CD8-positive, alpha-beta memory T cell (primary cell): ENCODE measurements at regions of chr1 and their contacts with region 1.

Region 1: DNA sequence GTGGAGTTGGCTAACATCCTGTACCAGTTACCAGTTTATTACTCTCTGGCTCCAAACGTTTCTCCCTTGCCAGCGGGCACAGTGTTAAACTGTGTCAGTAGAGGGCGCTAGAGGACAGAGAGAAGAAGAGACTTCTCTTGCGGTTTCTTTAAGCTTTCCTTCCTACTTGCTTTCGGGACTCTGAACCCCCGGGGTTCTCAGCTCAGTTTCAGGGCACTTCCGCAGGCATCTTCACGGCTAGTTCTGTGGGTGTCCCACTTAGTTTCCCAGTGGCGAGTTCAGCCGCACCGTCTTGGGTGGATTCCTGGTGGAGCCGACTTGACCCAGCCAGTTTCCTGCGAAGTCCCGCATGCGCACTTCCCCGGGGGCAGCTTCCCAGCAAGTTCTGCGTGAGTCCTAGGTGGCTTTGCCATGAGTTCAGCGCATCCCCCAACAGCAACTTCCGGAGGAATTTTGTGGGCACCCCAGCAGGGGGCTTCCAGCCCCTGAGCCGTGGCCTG is 37.9 kb upstream of the BTG2 start:
- DNase-seq: peak; percentile 68 to 88 (median 82)
- H3K4me3 ChIP-seq: peak overlapping the region; percentile 83
- H3K4me3 Mint-ChIP-seq: peak overlapping the region; percentile 82 to 93 (median 87)
- H3K27ac ChIP-seq: no peak overlapping the region
- H3K27ac Mint-ChIP-seq: peak overlapping the region; percentile 82 to 95 (median 92)
- H3K4me1 ChIP-seq: peaks cover 34% of the 10 kb centered on the region
- H3K4me1 Mint-ChIP-seq: peaks cover 11 to 22% (median 21%) of the 10 kb centered on the region in 3 donors
- H3K27me3 ChIP-seq: no peaks in the 10 kb centered on the region
- H3K27me3 Mint-ChIP-seq: peaks cover 2 to 3% of the 10 kb centered on the region in 2 donors

Region 2: DNA sequence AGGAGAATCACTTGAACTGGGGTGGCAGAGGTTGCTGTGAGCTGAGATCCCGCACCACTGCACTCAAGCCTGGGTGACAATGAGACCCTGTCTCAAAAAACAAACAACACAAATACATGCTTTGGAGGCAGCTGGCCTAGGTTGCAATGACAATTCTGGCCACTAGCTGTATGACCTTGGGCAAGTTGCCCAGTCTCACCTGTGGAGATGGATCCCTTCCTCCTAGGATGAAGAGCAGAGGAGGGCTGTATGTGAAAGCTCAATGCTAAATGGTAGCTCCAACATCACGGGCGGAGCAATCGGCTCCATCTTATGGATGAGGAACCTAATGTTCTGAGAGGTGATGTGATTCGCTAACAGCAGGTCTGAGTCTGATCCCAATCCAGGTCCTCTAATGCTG is 119.3 kb before region 1 on chr1:
- CTCF ChIA-PET with region 1: no interaction called
- POLR2A ChIA-PET with region 1: no interaction called
- DNase-seq: no peak
- H3K4me3 ChIP-seq: no peak overlapping the region
- H3K4me3 Mint-ChIP-seq: no peak overlapping the region
- H3K27ac ChIP-seq: no peak overlapping the region
- H3K27ac Mint-ChIP-seq: no peak overlapping the region
- H3K4me1 ChIP-seq: no peaks in the 10 kb centered on the region
- H3K4me1 Mint-ChIP-seq: no peaks in the 10 kb centered on the region
- H3K27me3 ChIP-seq: no peaks in the 10 kb centered on the region
- H3K27me3 Mint-ChIP-seq: peaks cover 7 to 11% of the 10 kb centered on the region in 2 donors

Region 3: GRCh38 chr1:203252678-203253077 is 14.7 kb before region 1 on chr1:
- CTCF ChIA-PET with region 1: interaction called, 15 read pairs
- POLR2A ChIA-PET with region 1: no interaction called
- DNase-seq: no peak
- H3K4me3 ChIP-seq: no peak overlapping the region
- H3K4me3 Mint-ChIP-seq: no peak overlapping the region
- H3K27ac ChIP-seq: no peak overlapping the region
- H3K27ac Mint-ChIP-seq: no peak overlapping the region
- H3K4me1 ChIP-seq: no peaks in the 10 kb centered on the region
- H3K4me1 Mint-ChIP-seq: no peaks in the 10 kb centered on the region
- H3K27me3 ChIP-seq: no peaks in the 10 kb centered on the region
- H3K27me3 Mint-ChIP-seq: peaks cover 34 to 78% of the 10 kb centered on the region in 2 donors

Region 4: DNA sequence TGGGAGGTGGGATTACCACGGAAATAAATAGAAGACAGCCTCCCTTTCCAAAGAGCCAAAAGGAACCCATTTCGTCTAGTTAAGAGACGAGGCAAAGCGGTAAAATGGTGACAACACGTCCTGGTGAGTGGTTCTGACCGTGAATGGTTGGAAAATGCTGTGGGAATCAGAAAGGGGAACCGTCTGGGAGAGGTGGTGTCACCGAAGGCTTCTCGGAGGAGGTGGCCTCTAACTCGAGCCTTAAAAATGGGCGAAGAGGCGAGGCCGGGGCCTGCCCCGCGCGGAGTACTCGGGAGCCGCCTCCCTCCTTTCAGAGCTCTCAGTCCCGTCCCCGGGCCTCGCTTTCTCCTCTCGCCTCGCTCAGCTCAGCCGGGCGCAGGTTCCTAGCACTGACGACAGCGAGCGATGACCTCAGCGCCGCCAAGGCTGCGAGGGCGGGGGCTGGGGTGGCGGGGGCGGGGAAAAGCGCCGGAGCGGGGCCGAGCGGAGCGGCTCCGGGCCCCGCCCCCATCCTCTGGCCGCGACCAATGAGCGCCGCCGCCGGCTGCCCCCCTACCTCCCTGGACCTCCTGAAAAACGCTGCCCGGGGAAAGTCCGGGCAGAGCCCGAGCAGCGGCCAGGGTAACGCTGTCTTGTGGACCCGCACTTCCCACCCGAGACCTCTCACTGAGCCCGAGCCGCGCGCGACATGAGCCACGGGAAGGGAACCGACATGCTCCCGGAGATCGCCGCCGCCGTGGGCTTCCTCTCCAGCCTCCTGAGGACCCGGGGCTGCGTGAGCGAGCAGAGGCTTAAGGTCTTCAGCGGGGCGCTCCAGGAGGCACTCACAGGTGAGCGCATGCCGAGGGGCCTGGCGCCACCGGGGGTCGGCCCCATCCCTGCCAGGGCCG is 37.8 kb after region 1 on chr1 and contains the start of gene BTG2:
- CTCF ChIA-PET with region 1: interaction called, 108 read pairs
- POLR2A ChIA-PET with region 1: interaction called, 20 read pairs
- DNase-seq: peak; percentile 89 to 95 (median 90)
- H3K4me3 ChIP-seq: peak within 1 kb of the TSS; percentile 92
- H3K4me3 Mint-ChIP-seq: peak within 1 kb of the TSS; percentile 92 to 99 (median 98)
- H3K27ac ChIP-seq: peak within 1 kb of the TSS; percentile 98
- H3K27ac Mint-ChIP-seq: peak within 1 kb of the TSS; percentile 98 to 100 (median 99)
- H3K4me1 ChIP-seq: peaks cover 40% of the 10 kb centered on the region
- H3K4me1 Mint-ChIP-seq: peaks cover 57 to 65% (median 59%) of the 10 kb centered on the region in 3 donors
- H3K27me3 ChIP-seq: no peaks in the 10 kb centered on the region
- H3K27me3 Mint-ChIP-seq: peaks cover 0 to 14% of the 10 kb centered on the region in 2 donors
- total RNA-seq, gene BTG2: 97.8 to 102 TPM

Region 5: GRCh38 chr1:203326830-203327683 is 59.7 kb after region 1 on chr1:
- CTCF ChIA-PET with region 1: interaction called, 775 read pairs
- POLR2A ChIA-PET with region 1: interaction called, 14 read pairs
- DNase-seq: peak; percentile 91 to 97 (median 95)
- H3K4me3 ChIP-seq: peak overlapping the region; percentile 78
- H3K4me3 Mint-ChIP-seq: peak overlapping the region; percentile 77 to 90 (median 80)
- H3K27ac ChIP-seq: peak overlapping the region; percentile 90
- H3K27ac Mint-ChIP-seq: peak overlapping the region; percentile 93 to 99 (median 98)
- H3K4me1 ChIP-seq: peaks cover 63% of the 10 kb centered on the region
- H3K4me1 Mint-ChIP-seq: peaks cover 65 to 68% (median 66%) of the 10 kb centered on the region in 3 donors
- H3K27me3 ChIP-seq: no peaks in the 10 kb centered on the region
- H3K27me3 Mint-ChIP-seq: peaks cover 0 to 3% of the 10 kb centered on the region in 2 donors

Region 6: DNA sequence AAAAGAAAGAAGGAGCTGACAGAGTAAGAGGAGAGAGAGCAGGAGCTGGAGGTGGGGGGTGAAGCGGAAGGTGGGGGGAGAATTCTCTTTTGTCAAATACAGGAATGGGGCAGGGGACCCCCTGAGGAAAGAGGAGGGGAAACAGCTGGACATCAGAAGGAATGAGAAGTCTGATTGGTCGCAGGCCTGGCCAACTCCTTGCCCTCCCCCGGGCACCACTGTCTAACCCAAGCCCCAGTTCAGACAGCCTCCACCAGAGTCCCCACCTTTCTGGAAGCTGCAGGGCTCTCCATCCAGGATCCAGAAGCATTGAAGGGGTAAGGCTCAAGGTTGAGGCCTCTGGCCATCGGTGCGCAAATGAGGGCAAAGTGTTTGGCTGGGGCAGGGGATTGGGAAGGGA is 226.5 kb after region 1 on chr1 and contains the start of gene OPTC:
- CTCF ChIA-PET with region 1: interaction called, 228 read pairs
- POLR2A ChIA-PET with region 1: no interaction called
- DNase-seq: no peak
- H3K4me3 ChIP-seq: no peak within 1 kb of the TSS
- H3K4me3 Mint-ChIP-seq: no peak within 1 kb of the TSS
- H3K27ac ChIP-seq: no peak within 1 kb of the TSS
- H3K27ac Mint-ChIP-seq: no peak within 1 kb of the TSS
- H3K4me1 ChIP-seq: no peaks in the 10 kb centered on the region
- H3K4me1 Mint-ChIP-seq: peaks cover 0 to 2% (median 0%) of the 10 kb centered on the region in 3 donors
- H3K27me3 ChIP-seq: no peaks in the 10 kb centered on the region
- H3K27me3 Mint-ChIP-seq: peaks cover 18 to 26% of the 10 kb centered on the region in 2 donors
- total RNA-seq, gene OPTC: not detected